Calu3 (cell line): ENCODE measurements at regions of chr3 and their contacts with region 1.

Region 1: DNA sequence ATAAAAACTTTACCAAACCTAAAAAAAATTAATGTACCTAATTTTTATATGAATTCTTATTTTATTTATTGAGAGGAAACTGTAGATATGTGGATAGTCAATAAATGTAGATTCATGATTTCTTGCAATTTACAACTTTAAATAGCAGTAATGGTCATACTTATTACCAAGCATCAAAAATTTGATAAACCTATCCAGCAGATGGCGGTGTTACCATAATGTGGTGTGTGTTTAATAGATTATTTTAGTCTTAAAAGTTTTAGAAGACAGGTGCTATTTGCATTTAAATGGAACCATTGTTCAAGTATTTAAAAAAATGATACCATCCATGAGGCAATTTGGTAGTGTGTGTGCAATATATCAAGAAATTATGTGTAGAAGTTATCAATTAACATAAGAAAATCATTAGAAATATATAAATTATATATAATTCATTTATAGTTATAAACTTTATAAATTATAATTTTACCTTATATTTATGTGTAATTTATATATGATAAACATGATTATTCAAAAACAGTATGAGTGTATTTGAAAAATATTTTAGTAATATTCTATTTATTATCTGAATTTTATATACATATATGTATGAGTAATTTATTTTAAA is 176.0 kb upstream of the BCHE start:
- DNase-seq: peak; percentile 64
- H3K4me3 Mint-ChIP-seq: no peak overlapping the region
- H3K27ac Mint-ChIP-seq: no peak overlapping the region
- H3K4me1 Mint-ChIP-seq: no peaks in the 10 kb centered on the region
- H3K27me3 Mint-ChIP-seq: no peaks in the 10 kb centered on the region
- CTCF ChIP-seq: peak; percentile 60

Region 2: GRCh38 chr3:165339753-165340152 is 673.4 kb before region 1 on chr3:
- CTCF ChIA-PET with region 1: no interaction called
- intact Hi-C with region 1: loop called (anchors 5 kb)
- DNase-seq: peak; percentile 14
- H3K4me3 Mint-ChIP-seq: no peak overlapping the region
- H3K27ac Mint-ChIP-seq: no peak overlapping the region
- H3K4me1 Mint-ChIP-seq: no peaks in the 10 kb centered on the region
- H3K27me3 Mint-ChIP-seq: no peaks in the 10 kb centered on the region
- CTCF ChIP-seq: peak; percentile 36

Region 3: GRCh38 chr3:166554023-166554422 is 540.8 kb after region 1 on chr3:
- CTCF ChIA-PET with region 1: no interaction called
- intact Hi-C with region 1: loop called (anchors 10 kb)
- DNase-seq: no peak
- H3K4me3 Mint-ChIP-seq: no peak overlapping the region
- H3K27ac Mint-ChIP-seq: no peak overlapping the region
- H3K4me1 Mint-ChIP-seq: no peaks in the 10 kb centered on the region
- H3K27me3 Mint-ChIP-seq: no peaks in the 10 kb centered on the region
- CTCF ChIP-seq: no peak

Region 4: GRCh38 chr3:166685246-166685645 is 672.1 kb after region 1 on chr3:
- CTCF ChIA-PET with region 1: interaction called, 7 read pairs
- intact Hi-C with region 1: loop called (anchors 1 kb)
- DNase-seq: no peak
- H3K4me3 Mint-ChIP-seq: no peak overlapping the region
- H3K27ac Mint-ChIP-seq: no peak overlapping the region
- H3K4me1 Mint-ChIP-seq: no peaks in the 10 kb centered on the region
- H3K27me3 Mint-ChIP-seq: no peaks in the 10 kb centered on the region
- CTCF ChIP-seq: no peak

Region 5: GRCh38 chr3:166902374-166902773 is 889.2 kb after region 1 on chr3:
- CTCF ChIA-PET with region 1: no interaction called
- intact Hi-C with region 1: loop called (anchors 1 kb)
- DNase-seq: no peak
- H3K4me3 Mint-ChIP-seq: no peak overlapping the region
- H3K27ac Mint-ChIP-seq: no peak overlapping the region
- H3K4me1 Mint-ChIP-seq: no peaks in the 10 kb centered on the region
- H3K27me3 Mint-ChIP-seq: no peaks in the 10 kb centered on the region
- CTCF ChIP-seq: no peak

Region 6: DNA sequence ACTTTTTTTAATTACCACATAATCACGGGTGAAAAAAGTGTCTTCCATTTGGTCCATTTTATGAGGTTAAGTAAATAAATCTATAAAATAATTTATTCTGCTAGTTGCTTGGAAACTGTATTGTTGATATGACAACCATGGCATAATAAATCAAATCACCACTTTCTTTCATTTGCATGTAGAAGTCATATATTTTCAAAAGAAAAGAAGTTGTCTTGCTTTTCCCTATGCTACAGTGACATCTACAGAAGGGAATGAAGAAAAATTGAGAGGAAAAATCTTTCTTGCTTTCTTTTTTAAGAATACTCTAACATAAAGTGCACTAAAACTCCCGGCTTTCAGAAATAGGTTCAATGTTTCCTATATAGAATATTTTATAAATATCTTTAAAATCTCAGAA is 1138.5 kb after region 1 on chr3:
- CTCF ChIA-PET with region 1: no interaction called
- intact Hi-C with region 1: loop called (anchors 10 kb)
- DNase-seq: no peak
- H3K4me3 Mint-ChIP-seq: no peak overlapping the region
- H3K27ac Mint-ChIP-seq: no peak overlapping the region
- H3K4me1 Mint-ChIP-seq: no peaks in the 10 kb centered on the region
- H3K27me3 Mint-ChIP-seq: no peaks in the 10 kb centered on the region
- CTCF ChIP-seq: no peak

Region 7: DNA sequence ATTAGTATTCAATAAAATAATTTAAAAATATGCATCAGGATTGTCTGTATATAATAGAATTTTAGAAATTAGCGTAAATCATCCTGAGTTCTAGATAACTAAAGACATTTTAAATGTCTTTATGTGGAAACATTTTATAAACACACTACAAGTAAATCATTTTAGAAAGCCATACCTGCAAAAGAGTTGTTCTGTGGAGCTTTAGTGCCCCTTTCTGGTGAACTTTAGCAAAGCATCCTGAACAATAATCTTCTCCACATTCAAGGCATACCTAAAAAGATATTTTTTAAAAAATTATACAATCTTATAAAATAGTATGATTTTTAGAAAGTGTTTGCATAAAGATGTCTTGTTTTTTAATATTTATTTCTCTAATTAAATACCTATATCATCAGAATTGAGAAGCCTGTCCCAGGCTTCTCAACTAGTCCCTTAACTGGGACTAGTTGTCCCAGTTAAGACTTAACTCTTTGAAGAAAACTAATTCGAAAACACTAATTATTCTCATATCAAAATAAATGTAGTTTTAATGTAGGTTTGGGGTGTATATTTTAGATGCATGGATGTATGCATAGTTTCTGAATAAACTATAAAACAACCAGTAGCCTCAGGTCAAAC is 1337.2 kb after region 1 on chr3:
- CTCF ChIA-PET with region 1: no interaction called
- intact Hi-C with region 1: loop called (anchors 1 kb)
- DNase-seq: peak; percentile 48
- H3K4me3 Mint-ChIP-seq: no peak overlapping the region
- H3K27ac Mint-ChIP-seq: no peak overlapping the region
- H3K4me1 Mint-ChIP-seq: peaks cover 15% of the 10 kb centered on the region
- H3K27me3 Mint-ChIP-seq: no peaks in the 10 kb centered on the region
- CTCF ChIP-seq: peak; percentile 79